ENCODE measurements at regions of chr1 and their contacts with region 1.

Region 1: DNA sequence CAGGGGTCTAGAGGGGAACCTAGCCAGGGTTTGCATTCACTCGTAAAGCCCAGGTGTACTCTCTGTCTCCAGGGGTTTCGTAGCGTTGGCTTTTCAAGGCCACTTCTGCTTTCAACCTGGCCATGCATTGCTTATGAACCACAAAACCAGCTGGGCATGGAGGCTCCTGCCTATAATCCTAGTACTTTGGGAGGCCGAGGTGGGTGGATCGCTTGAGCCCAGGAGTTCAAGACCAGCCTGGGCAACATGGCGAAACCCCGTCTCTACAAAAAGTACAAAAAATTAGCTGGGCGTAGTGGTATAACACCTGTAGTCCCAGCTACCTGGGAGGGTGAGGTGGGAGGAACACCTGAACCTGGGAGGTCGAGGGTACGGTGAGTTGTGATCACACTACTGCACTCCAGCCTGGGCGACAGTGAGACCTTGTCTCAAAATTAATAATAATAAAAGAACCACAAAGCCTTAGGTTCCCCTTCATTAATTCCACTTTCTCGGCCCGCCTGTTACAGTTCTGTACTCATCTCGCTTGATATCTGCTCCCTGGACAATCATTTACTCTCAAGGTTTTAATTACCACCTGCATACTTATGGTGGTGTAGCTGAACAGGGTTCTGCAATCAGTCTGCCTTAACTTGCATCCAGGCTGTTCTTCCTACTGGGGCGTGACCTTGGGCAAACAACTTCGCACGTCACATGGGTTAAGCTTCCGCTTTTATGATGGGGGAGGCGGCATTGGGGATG is 6.1 kb downstream of the SLC16A4 start:
- DNase-seq: no peak
- ATAC-seq: no peak
- H3K4me3 ChIP-seq: no peak overlapping the region
- H3K27ac ChIP-seq: peak overlapping the region in 3 of 12 donors; percentile 33 to 79 (median 45)
- H3K4me1 ChIP-seq: peaks cover 0 to 32% (median 7%) of the 10 kb centered on the region in 12 donors
- H3K27me3 ChIP-seq: no peaks in the 10 kb centered on the region
- CTCF ChIP-seq: no peak
- POLR2A ChIP-seq: no peak

Region 2: DNA sequence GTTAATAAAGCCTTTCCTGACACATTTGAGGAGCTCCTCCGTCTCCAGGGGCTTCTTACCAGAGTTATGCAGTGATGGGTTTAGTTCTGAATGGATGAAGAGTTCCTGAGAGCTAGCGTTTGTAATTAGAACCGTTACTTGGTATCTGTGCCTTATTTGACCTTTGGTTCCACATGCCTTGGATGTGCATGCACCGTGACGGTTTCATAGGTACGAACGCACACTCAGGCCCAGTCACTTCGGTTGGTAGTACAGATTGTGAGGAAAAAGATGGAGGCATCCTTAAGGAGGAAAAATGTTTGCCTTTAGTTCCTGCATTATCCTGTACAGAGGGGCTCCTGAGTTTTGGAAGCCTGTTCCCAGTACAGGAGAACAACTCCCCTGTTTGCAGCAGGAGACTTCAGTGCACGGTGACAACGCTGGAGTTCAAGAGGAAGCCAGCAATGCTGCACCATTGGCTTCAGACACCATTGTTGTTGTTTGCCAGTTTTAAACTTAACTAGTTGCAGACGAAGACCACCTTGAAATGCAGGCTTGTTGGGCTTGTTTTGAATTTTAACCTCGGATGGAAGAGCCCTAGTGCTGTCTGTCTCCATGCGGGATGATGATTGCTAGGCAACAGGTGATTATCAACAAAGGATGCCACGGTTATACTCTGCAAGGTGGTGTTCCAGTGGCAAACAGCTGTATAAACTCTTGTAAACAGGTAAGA is 37.4 kb before region 1 on chr1:
- intact Hi-C with region 1: loop called in 1 of 10 experiments (anchors 5 kb)
- DNase-seq: no peak
- ATAC-seq: peak in 2 of 4 donors; percentile 32 to 39
- H3K4me3 ChIP-seq: no peak overlapping the region
- H3K27ac ChIP-seq: no peak overlapping the region
- H3K4me1 ChIP-seq: peaks cover 6 to 95% (median 82%) of the 10 kb centered on the region in 12 donors
- H3K27me3 ChIP-seq: no peaks in the 10 kb centered on the region
- CTCF ChIP-seq: no peak
- POLR2A ChIP-seq: no peak

Region 3: DNA sequence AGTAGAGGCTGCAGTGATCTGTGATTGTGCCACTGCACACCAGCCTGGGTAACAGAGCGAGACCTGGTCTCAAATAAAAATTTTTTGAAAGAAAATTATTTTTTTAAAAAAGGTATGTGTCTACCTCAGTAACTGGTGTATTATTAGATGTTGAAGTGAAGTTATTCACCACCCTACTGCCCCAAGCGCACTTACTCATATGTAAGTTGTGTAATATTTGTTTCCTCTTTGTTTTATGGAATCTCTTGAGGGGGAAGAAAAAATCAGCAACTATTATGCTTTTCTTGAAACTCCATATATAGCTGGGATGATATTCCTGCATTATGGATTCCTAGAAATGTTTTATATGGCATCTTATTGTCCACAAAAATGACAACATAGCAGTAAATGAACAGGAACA is 24.3 kb before region 1 on chr1:
- intact Hi-C with region 1: loop called in 1 of 10 experiments (anchors 2 kb)
- DNase-seq: no peak
- ATAC-seq: no peak
- H3K4me3 ChIP-seq: no peak overlapping the region
- H3K27ac ChIP-seq: no peak overlapping the region
- H3K4me1 ChIP-seq: peaks cover 0 to 12% (median 0%) of the 10 kb centered on the region in 12 donors
- H3K27me3 ChIP-seq: no peaks in the 10 kb centered on the region
- CTCF ChIP-seq: no peak
- POLR2A ChIP-seq: no peak